K562 (cell line): ENCODE measurements at regions of chr17 and their contacts with region 1.

Region 1: DNA sequence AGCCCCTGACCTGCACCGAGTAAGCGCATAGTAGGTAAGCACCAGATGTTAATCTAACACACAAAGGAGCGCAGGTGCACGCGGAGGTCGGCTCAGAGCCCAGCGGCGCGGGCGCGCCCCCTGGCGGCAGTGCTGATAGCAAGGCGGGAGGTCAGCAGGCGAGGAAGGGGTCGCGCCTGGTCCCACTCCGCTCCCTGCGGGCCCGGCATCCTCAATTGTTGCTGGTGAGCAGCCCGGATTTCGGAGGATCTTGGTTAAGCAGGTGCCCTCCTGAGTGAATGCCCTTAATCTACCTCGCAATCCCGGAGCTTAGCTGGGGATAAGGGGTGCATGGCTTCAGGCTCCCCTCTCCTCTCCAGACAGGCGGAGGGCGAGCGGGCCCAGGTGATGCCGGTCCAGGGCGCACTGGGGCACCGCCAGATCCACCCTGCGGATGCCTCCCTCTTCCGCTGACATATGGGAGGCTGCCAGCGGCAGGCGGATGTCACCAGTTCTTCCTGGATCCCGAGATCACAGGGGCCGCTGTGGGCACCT is 4.0 kb upstream of the WNT3 start:
- DNase-seq: peak; percentile 72 to 75 (median 72)
- ATAC-seq: peak; percentile 59
- H3K4me3 ChIP-seq: no peak overlapping the region
- H3K27ac ChIP-seq: no peak overlapping the region
- H3K4me1 ChIP-seq: peaks cover 15 to 48% of the 10 kb centered on the region in 2 experiments; a peak in 4 of 5 replicates
- H3K27me3 ChIP-seq: no peaks in the 10 kb centered on the region
- CTCF ChIP-seq: peak; percentile 79 to 94 (median 88)
- EP300 ChIP-seq: no peak
- POLR2A ChIP-seq: no peak
- RAD21 ChIP-seq: peak; percentile 68 to 93

Region 2: GRCh38 chr17:45584092-45585036 is 1238.1 kb before region 1 on chr17:
- CTCF ChIA-PET with region 1: no interaction called
- POLR2A ChIA-PET with region 1: no interaction called
- in situ Hi-C with region 1: loop called (anchors 25 kb)
- intact Hi-C with region 1: no loop called
- DNase-seq: peak; percentile 64 to 73 (median 70)
- ATAC-seq: peak; percentile 86
- H3K4me3 ChIP-seq: peak overlapping the region; percentile 53
- H3K27ac ChIP-seq: peak overlapping the region; percentile 53
- H3K4me1 ChIP-seq: peaks cover 9 to 24% of the 10 kb centered on the region in 2 experiments; a peak in 4 of 5 replicates
- H3K27me3 ChIP-seq: peaks cover 2 to 30% of the 10 kb centered on the region in 2 experiments; a peak in 4 of 5 replicates
- CTCF ChIP-seq: no peak
- EP300 ChIP-seq: no peak
- POLR2A ChIP-seq: peak; percentile 55; the same call in 1 of the 2 replicates
- RAD21 ChIP-seq: no peak

Region 3: GRCh38 chr17:46782250-46782953 is 40.1 kb before region 1 on chr17:
- CTCF ChIA-PET with region 1: no interaction called
- POLR2A ChIA-PET with region 1: interaction called, 5 read pairs
- in situ Hi-C with region 1: no loop called
- intact Hi-C with region 1: loop called (anchors 1 kb)
- DNase-seq: peak; percentile 77 to 87 (median 82)
- ATAC-seq: peak; percentile 96
- H3K4me3 ChIP-seq: no peak overlapping the region
- H3K27ac ChIP-seq: no peak overlapping the region; the same call in 2 of the 3 replicates
- H3K4me1 ChIP-seq: peaks cover 36 to 67% of the 10 kb centered on the region in 2 experiments
- H3K27me3 ChIP-seq: no peaks in the 10 kb centered on the region
- CTCF ChIP-seq: peak; percentile 93 to 94 (median 93)
- EP300 ChIP-seq: no peak
- POLR2A ChIP-seq: no peak
- RAD21 ChIP-seq: peak; percentile 84 to 96

Region 4: DNA sequence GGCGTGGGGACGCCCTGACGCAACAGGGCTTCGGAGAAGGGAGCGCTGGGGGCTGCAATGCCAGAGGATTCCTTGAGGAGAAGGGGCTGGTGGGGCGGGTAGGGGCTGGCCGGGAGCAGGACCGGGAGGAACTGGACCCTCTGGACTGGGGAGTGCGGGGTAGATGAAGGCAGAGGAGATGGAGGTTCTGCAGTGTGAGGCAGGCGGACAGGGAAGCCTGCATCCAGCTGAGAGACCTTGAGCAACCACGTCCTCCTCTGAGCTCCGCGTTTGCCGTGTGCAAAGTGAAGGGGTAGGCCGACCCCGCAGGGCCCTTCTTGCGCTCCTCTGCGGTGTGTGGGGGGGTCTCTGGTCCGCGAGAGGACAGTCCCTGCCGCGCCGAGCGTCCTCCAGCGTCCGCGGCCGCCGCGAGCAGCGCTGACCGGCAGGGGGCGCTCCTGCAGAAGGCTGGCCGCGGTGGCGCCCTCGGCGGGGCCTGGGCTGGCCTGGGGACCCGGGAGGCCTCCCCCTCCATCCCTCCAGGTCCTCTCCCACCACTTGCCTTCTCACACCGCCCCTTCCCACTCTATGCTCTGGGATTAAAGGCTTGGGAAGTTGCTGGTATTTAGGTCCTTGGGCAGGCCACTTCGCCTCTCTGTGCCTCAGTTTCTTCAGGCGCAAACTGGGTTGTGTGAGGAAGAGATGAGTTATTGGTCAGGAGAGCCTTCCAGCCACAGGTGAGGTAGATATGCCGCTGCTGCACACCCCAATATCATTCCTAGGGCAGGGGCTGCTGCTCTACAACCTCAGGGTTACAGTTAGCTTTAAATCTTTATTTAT is 19.3 kb after region 1 on chr17:
- CTCF ChIA-PET with region 1: no interaction called
- POLR2A ChIA-PET with region 1: no interaction called
- in situ Hi-C with region 1: no loop called
- intact Hi-C with region 1: no loop called
- DNase-seq: peak; percentile 52 to 82 (median 81)
- ATAC-seq: peak; percentile 97
- H3K4me3 ChIP-seq: peak overlapping the region; percentile 9; the same call in 1 of the 2 replicates
- H3K27ac ChIP-seq: no peak overlapping the region
- H3K4me1 ChIP-seq: peaks cover 0 to 9% of the 10 kb centered on the region in 2 experiments; a peak in 4 of 5 replicates
- H3K27me3 ChIP-seq: peaks cover 0 to 7% of the 10 kb centered on the region in 2 experiments; a peak in 3 of 5 replicates
- CTCF ChIP-seq: peak; percentile 79 to 92 (median 90)
- EP300 ChIP-seq: no peak
- POLR2A ChIP-seq: no peak
- RAD21 ChIP-seq: peak; percentile 56 to 88